Colonic mucosa (tissue), 4 donors: ENCODE measurements at regions of chr5 and their contacts with region 1.

Region 1: GRCh38 chr5:59810041-59810440 is 83.5 kb downstream of the PDE4D start:
- DNase-seq: peak; percentile 70
- H3K4me3 ChIP-seq: no peak overlapping the region
- H3K27ac ChIP-seq: no peak overlapping the region
- H3K4me1 ChIP-seq: no peaks in the 10 kb centered on the region
- H3K27me3 ChIP-seq: no peaks in the 10 kb centered on the region
- CTCF ChIP-seq: peak; percentile 89

Region 2: DNA sequence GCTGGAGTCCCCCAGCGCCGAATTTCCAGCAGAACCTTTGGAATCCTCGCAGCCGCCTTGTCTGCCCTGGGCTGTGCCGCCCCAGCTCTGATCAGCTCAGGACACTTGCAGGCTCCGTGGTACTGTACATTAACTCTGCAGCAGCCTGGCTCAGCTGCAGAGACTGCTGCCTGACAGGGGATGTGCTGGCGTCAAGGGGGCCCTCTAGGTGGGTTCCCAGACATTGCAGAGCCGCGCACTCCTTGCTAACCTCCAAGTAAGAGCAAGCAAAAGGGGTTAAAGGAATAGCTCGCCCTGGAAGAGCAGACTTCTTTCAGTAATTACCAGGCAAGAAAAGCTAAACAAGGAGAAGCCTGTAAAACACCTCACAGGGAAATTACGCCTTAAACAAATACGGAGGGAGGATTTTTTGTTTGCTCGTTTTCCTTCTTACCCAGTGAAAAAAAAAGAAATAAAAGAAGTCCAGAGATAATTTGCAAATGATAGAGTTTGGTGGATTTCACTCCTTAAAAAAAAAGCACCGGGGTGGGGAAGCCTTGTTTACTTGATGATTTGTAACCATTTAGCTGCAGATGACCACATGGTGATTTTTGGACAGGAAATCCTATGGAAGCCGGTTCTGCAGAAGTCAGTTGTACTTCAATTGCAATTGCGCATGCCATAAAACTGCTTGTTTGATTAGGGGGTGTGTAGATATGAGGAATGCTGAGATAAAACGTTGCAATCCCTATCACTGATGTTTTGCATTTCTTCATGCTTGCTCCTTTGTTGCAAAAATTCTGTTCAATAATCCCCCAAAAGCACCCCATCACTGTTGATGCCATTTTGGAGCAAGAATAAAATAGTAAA is 222.3 kb before region 1 on chr5:
- intact Hi-C with region 1: no loop called
- DNase-seq: peak; percentile 85
- H3K4me3 ChIP-seq: peak overlapping the region; percentile 35
- H3K27ac ChIP-seq: peak overlapping the region; percentile 61
- H3K4me1 ChIP-seq: peaks cover 11% of the 10 kb centered on the region
- H3K27me3 ChIP-seq: no peaks in the 10 kb centered on the region
- CTCF ChIP-seq: no peak

Region 3: DNA sequence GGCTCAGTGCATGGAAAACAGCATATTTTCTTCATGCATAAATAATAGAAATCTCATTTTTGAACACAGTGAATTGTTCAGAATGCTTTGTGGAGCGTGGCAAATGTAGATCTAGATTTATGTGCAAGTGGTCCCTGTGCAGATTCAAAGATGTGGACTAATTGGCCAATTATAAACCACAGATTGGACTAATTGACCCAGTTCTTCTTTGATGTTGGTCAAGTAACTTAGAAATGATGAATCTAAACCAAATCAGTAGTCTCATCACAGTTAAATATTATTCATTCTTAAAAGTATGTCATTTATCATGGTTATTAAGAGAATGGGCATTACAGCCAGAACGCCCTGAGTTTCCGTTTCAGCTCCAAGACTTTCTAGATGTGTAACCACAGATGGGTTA is 95.1 kb after region 1 on chr5:
- intact Hi-C with region 1: no loop called
- DNase-seq: no peak
- H3K4me3 ChIP-seq: no peak overlapping the region
- H3K27ac ChIP-seq: no peak overlapping the region
- H3K4me1 ChIP-seq: no peaks in the 10 kb centered on the region
- H3K27me3 ChIP-seq: no peaks in the 10 kb centered on the region
- CTCF ChIP-seq: no peak

Region 4: DNA sequence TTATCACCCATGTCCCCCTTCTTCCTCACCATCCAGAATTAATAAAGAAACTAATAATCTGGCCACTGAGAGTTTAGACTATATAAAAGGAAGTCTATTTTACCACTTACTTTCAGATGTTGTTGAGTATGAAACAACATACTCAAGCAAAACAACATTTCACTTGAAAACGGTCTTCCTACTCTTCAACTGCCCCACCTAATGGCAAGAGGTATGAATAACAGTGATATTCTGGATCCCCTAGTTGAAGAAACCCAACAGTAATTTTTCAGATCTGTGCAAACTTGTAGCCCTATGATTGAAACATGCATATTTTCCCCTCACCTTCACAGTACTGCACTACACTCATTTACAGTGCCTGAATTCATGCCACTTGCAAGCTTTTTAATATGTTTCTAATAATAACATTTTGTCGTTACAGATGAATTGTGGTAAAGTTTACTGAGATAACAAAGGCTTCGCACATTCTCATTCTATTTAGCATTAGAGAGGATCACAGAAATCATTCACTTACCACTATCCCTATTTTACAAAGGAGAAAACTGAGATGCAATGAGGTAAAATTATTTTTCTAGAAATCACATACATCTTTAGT is 351.4 kb after region 1 on chr5:
- intact Hi-C with region 1: loop called (anchors 2 kb)
- DNase-seq: no peak
- H3K4me3 ChIP-seq: no peak overlapping the region
- H3K27ac ChIP-seq: no peak overlapping the region
- H3K4me1 ChIP-seq: no peaks in the 10 kb centered on the region
- H3K27me3 ChIP-seq: no peaks in the 10 kb centered on the region
- CTCF ChIP-seq: peak; percentile 38

Region 5: GRCh38 chr5:60287174-60287771 is 477.2 kb after region 1 on chr5:
- intact Hi-C with region 1: loop called (anchors 10 kb)
- DNase-seq: peak; percentile 43
- H3K4me3 ChIP-seq: no peak overlapping the region
- H3K27ac ChIP-seq: no peak overlapping the region
- H3K4me1 ChIP-seq: no peaks in the 10 kb centered on the region
- H3K27me3 ChIP-seq: no peaks in the 10 kb centered on the region
- CTCF ChIP-seq: peak; percentile 53

Region 6: DNA sequence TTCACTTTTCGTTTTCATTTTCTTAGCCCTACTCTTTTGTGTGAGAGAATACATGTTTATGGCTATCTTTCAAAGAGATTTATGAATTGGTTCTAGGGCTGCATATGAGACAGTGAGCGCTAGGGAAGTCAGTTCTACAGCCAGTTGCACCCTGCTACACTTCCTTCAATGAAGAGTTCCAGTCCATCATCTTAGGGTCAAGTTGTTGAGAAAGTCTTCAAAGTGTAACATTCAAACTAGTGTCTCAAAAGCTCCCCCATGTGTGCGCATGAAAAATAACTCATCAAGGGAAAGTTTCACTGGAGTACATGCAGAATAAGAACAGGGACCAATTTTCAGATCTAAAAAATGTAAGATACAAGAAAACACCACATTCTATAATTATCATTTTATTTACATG is 572.7 kb after region 1 on chr5:
- intact Hi-C with region 1: loop called (anchors 5 kb)
- DNase-seq: no peak
- H3K4me3 ChIP-seq: no peak overlapping the region
- H3K27ac ChIP-seq: no peak overlapping the region
- H3K4me1 ChIP-seq: no peaks in the 10 kb centered on the region
- H3K27me3 ChIP-seq: no peaks in the 10 kb centered on the region
- CTCF ChIP-seq: no peak

Region 7: GRCh38 chr5:60583616-60584015 is 773.6 kb after region 1 on chr5:
- intact Hi-C with region 1: loop called (anchors 5 kb)
- DNase-seq: no peak
- H3K4me3 ChIP-seq: no peak overlapping the region
- H3K27ac ChIP-seq: no peak overlapping the region
- H3K4me1 ChIP-seq: no peaks in the 10 kb centered on the region
- H3K27me3 ChIP-seq: no peaks in the 10 kb centered on the region
- CTCF ChIP-seq: no peak

Region 8: GRCh38 chr5:60649283-60649917 is 839.4 kb after region 1 on chr5:
- intact Hi-C with region 1: loop called (anchors 5 kb)
- DNase-seq: no peak
- H3K4me3 ChIP-seq: no peak overlapping the region
- H3K27ac ChIP-seq: no peak overlapping the region
- H3K4me1 ChIP-seq: no peaks in the 10 kb centered on the region
- H3K27me3 ChIP-seq: no peaks in the 10 kb centered on the region
- CTCF ChIP-seq: peak; percentile 44

Region 9: GRCh38 chr5:60668686-60669304 is 858.8 kb after region 1 on chr5:
- intact Hi-C with region 1: loop called (anchors 5 kb)
- DNase-seq: no peak
- H3K4me3 ChIP-seq: no peak overlapping the region
- H3K27ac ChIP-seq: no peak overlapping the region
- H3K4me1 ChIP-seq: peaks cover 10% of the 10 kb centered on the region
- H3K27me3 ChIP-seq: no peaks in the 10 kb centered on the region
- CTCF ChIP-seq: peak; percentile 65